ENCODE measurements at regions of chr7 and their contacts with region 1.

Region 1: DNA sequence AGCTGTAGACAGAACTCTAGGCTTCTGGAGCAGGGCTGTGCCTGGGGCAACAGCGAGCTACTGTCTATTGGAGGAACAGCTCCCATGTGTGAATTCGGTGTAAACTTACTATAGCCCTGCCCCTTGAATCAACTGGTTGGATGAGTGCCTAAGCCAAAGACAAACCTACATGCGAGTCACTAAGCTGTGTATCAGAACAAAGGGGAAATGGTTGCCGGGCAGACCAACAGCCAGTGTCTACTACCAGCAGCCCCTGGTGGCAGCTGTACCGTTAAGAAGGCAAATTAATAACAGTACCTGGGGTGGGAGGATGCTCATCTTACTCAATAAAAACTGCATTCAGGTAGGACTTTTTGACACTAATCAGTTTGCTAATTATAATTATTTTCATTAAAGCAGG is 343.7 kb downstream of the ACTR3B start:
- DNase-seq: no peak
- ATAC-seq: no peak
- H3K4me3 Mint-ChIP-seq: no peak overlapping the region
- H3K27ac Mint-ChIP-seq: no peak overlapping the region
- H3K4me1 Mint-ChIP-seq: no peaks in the 10 kb centered on the region
- H3K27me3 Mint-ChIP-seq: no peaks in the 10 kb centered on the region

Region 2: DNA sequence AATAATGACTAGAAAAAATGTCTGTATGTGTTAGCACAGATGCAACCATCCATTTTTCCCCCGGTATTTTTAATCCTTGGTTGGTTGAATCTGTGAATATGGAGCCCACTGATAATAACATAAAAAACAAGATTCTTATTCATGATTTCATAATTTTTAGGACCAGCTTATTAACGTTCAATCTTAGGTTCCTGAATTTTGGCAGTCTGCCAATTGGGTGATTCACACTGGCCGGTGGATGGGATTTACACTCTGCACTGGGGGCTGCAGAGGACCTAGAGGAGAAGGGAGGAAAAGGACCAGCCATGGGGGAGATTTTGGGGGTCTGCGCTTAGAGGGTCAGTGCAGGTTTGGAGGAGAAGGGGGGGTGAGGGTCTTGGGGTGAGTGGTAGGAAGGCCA is 15.7 kb before region 1 on chr7:
- CTCF ChIA-PET with region 1: no interaction called
- POLR2A ChIA-PET with region 1: no interaction called
- intact Hi-C with region 1: loop called in 1 of 2 experiments (anchors 1 kb)
- DNase-seq: no peak
- ATAC-seq: no peak
- H3K4me3 Mint-ChIP-seq: no peak overlapping the region
- H3K27ac Mint-ChIP-seq: no peak overlapping the region
- H3K4me1 Mint-ChIP-seq: no peaks in the 10 kb centered on the region
- H3K27me3 Mint-ChIP-seq: no peaks in the 10 kb centered on the region

Measured in activated CD4-positive, alpha-beta T cell treated with anti-CD3 and anti-CD28 coated beads for 36 hours (primary cell).